CD8-positive, alpha-beta T cell (primary cell): ENCODE measurements at regions of chr1 and their contacts with region 1.

Region 1: GRCh38 chr1:231612393-231613089 is 14.0 kb upstream of the DISC1 start:
- DNase-seq: peak in 8 of 9 experiments; percentile 32 to 75 (median 60)
- ATAC-seq: peak; percentile 91
- H3K4me3 ChIP-seq: peak overlapping the region; percentile 23 to 47
- H3K4me3 Mint-ChIP-seq: peak overlapping the region; percentile 73
- H3K27ac ChIP-seq: peak overlapping the region; percentile 41 to 48
- H3K27ac Mint-ChIP-seq: peak overlapping the region; percentile 85
- H3K4me1 ChIP-seq: peaks cover 51% of the 10 kb centered on the region
- H3K4me1 Mint-ChIP-seq: peaks cover 60% of the 10 kb centered on the region
- H3K27me3 ChIP-seq: no peaks in the 10 kb centered on the region
- H3K27me3 Mint-ChIP-seq: no peaks in the 10 kb centered on the region
- CTCF ChIP-seq: no peak

Region 2: DNA sequence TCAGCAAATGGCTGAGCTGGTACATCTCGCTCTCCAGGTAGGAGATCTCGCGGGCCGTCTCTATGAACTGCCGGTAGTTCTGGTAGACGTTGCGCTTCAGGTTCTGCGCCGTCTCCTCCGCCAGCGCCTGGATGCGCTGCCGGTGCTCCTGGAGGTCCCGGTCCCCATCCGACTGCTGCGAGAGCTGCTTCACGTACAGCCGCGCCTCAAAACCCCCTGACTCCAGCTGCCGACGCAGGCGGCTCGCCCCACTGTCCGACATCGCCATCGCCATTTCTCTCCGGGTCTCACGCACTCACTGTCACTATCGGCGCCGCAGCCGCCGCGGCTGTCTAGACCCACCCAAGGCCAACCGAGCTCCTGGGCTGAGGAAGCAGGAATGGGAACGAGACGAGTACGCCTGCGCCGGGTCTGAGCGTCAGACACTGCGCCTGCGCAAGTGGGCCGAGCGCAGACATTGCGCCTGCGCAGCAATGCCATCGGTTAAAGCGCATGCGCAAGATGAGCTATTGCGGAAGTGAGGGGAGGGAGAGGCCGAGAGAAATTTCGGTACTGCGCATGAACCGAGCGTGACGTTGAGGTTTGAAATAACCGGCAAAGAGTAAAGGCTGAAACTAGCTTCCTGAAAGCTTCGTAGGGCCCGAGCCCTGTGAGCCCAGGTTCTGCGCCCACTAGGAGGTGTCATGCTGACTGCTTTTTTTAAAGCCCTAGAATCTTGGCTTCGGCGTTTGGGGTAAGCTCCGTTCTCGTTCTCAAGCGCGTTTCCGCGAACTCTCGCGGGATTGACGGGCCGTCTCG is 274.9 kb before region 1 on chr1 and contains the start of gene EXOC8:
- CTCF ChIA-PET with region 1: no interaction called
- POLR2A ChIA-PET with region 1: interaction called, 12 read pairs
- intact Hi-C with region 1: no loop called
- DNase-seq: peak; percentile 95 to 99 (median 98)
- ATAC-seq: peak; percentile 83
- H3K4me3 ChIP-seq: peak within 1 kb of the TSS; percentile 95 to 98
- H3K4me3 Mint-ChIP-seq: peak within 1 kb of the TSS; percentile 97
- H3K27ac ChIP-seq: peak within 1 kb of the TSS; percentile 97 to 98
- H3K27ac Mint-ChIP-seq: peak within 1 kb of the TSS; percentile 99
- H3K4me1 ChIP-seq: peaks cover 55% of the 10 kb centered on the region
- H3K4me1 Mint-ChIP-seq: peaks cover 64% of the 10 kb centered on the region
- H3K27me3 ChIP-seq: no peaks in the 10 kb centered on the region
- H3K27me3 Mint-ChIP-seq: no peaks in the 10 kb centered on the region
- CTCF ChIP-seq: no peak
- total RNA-seq, gene EXOC8: 28.8 to 28.9 TPM

Region 3: GRCh38 chr1:231571904-231572303 is 40.6 kb before region 1 on chr1:
- CTCF ChIA-PET with region 1: no interaction called
- POLR2A ChIA-PET with region 1: no interaction called
- intact Hi-C with region 1: no loop called
- DNase-seq: no peak
- ATAC-seq: no peak
- H3K4me3 ChIP-seq: no peak overlapping the region
- H3K4me3 Mint-ChIP-seq: no peak overlapping the region
- H3K27ac ChIP-seq: no peak overlapping the region
- H3K27ac Mint-ChIP-seq: no peak overlapping the region
- H3K4me1 ChIP-seq: no peaks in the 10 kb centered on the region
- H3K4me1 Mint-ChIP-seq: no peaks in the 10 kb centered on the region
- H3K27me3 ChIP-seq: no peaks in the 10 kb centered on the region
- H3K27me3 Mint-ChIP-seq: no peaks in the 10 kb centered on the region
- CTCF ChIP-seq: no peak

Region 4: GRCh38 chr1:231596337-231596791 is 16.2 kb before region 1 on chr1:
- CTCF ChIA-PET with region 1: no interaction called
- POLR2A ChIA-PET with region 1: no interaction called
- intact Hi-C with region 1: no loop called
- DNase-seq: no peak
- ATAC-seq: no peak
- H3K4me3 ChIP-seq: no peak overlapping the region
- H3K4me3 Mint-ChIP-seq: no peak overlapping the region
- H3K27ac ChIP-seq: no peak overlapping the region
- H3K27ac Mint-ChIP-seq: no peak overlapping the region
- H3K4me1 ChIP-seq: no peaks in the 10 kb centered on the region
- H3K4me1 Mint-ChIP-seq: peaks cover 2% of the 10 kb centered on the region
- H3K27me3 ChIP-seq: no peaks in the 10 kb centered on the region
- H3K27me3 Mint-ChIP-seq: no peaks in the 10 kb centered on the region
- CTCF ChIP-seq: no peak

Region 5: DNA sequence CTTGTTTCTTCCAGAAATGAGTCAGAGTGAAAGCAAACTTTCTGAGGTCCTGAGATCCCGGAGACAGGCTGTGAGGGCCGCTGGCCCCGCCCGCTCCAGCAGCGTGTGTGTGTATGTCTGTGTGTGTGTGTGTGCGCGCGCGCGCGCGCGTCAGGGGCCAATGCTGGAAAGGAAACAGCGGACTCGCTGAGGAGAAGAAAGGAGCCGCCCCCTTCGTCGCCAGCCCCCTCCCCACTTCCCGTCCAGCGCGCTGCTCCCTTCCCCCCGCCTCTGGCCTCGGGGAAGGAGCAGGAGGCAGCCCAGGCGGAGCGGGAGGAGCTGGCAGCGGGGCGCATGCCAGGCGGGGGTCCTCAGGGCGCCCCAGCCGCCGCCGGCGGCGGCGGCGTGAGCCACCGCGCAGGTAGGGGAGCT is 14.0 kb after region 1 on chr1 and contains the start of gene DISC1:
- CTCF ChIA-PET with region 1: no interaction called
- POLR2A ChIA-PET with region 1: interaction called, 6 read pairs
- intact Hi-C with region 1: loop called in 1 of 2 experiments (anchors 2 kb)
- DNase-seq: peak; percentile 31 to 80 (median 63)
- ATAC-seq: peak; percentile 75
- H3K4me3 ChIP-seq: peak within 1 kb of the TSS; percentile 89 to 92
- H3K4me3 Mint-ChIP-seq: peak within 1 kb of the TSS; percentile 96
- H3K27ac ChIP-seq: peak within 1 kb of the TSS; percentile 32 to 50
- H3K27ac Mint-ChIP-seq: peak within 1 kb of the TSS; percentile 90
- H3K4me1 ChIP-seq: peaks cover 26% of the 10 kb centered on the region
- H3K4me1 Mint-ChIP-seq: peaks cover 42% of the 10 kb centered on the region
- H3K27me3 ChIP-seq: peaks cover 0 to 7% of the 10 kb centered on the region in 2 experiments
- H3K27me3 Mint-ChIP-seq: no peaks in the 10 kb centered on the region
- CTCF ChIP-seq: no peak
- total RNA-seq, gene DISC1: 9.6 to 10.1 TPM